ENCODE measurements at regions of chr15 and their contacts with region 1.

Region 1: GRCh38 chr15:63759752-63760151 is 74.0 kb downstream of the HERC1 start:
- DNase-seq: no peak
- H3K4me3 ChIP-seq: no peak overlapping the region
- H3K27ac ChIP-seq: no peak overlapping the region
- H3K4me1 ChIP-seq: peaks cover 6 to 20% (median 12%) of the 10 kb centered on the region in 4 donors
- H3K27me3 ChIP-seq: no peaks in the 10 kb centered on the region
- CTCF ChIP-seq: no peak
- EP300 ChIP-seq: no peak
- POLR2A ChIP-seq: no peak

Region 2: DNA sequence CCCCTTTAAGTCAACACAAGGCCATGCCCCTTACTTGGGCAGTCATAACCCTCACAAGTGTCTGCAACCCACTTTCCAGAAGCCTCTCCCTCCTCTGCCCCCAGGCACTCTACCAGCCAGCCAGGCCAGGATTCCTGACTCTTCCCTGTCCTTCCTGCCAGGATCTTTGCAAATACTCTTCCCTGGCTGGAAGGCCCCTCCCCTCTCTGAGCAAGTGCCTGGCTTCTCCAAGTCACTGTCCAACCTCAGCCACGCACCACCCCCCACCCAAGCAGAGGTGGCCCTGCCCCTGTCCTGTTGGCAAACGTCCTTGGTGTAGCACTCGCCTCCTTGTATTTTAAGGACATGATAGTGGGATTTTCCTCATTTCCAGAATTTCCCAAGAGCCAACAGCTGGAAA is 310.0 kb before region 1 on chr15:
- intact Hi-C with region 1: no loop called
- DNase-seq: no peak
- H3K4me3 ChIP-seq: no peak overlapping the region
- H3K27ac ChIP-seq: no peak overlapping the region
- H3K4me1 ChIP-seq: peaks cover 0 to 21% (median 7%) of the 10 kb centered on the region in 4 donors
- H3K27me3 ChIP-seq: no peaks in the 10 kb centered on the region
- CTCF ChIP-seq: no peak
- EP300 ChIP-seq: no peak
- POLR2A ChIP-seq: no peak

Region 3: DNA sequence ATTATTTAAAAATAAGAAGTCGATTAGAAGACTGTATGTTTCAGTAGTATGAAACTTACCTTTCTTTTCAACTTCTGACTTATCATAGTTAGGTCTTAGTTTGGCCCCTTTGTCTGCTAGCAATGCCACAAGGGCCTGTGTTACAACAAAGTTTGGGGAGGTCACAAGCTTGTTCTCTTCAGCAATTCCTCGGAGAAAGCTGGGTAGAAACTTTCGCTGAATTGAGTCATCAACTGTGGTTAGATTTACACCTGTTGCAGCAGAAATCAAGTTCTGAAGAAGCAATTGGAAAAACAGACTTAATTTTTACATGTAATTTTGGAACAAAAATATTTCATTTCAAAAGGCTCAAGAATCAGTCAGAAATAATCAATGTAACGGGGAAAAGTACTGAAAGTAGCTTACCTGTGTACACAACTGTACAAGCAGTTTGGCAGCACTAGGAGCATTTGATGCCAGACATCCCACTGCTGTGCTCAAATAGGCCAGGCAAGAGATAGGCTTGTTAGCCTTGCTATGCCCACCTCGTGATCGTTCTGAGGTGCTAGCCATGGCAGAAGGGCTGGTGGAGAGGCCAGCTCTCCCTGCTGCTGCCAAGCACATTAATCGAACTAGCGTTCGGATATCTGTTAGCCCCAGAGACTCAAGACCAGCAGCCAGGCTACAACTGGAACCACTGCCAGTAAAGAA is 103.9 kb before region 1 on chr15:
- intact Hi-C with region 1: no loop called
- DNase-seq: no peak
- H3K4me3 ChIP-seq: no peak overlapping the region
- H3K27ac ChIP-seq: no peak overlapping the region
- H3K4me1 ChIP-seq: no peaks in the 10 kb centered on the region
- H3K27me3 ChIP-seq: no peaks in the 10 kb centered on the region
- CTCF ChIP-seq: no peak
- EP300 ChIP-seq: no peak
- POLR2A ChIP-seq: no peak

Region 4: GRCh38 chr15:64067564-64068030 is 307.8 kb after region 1 on chr15:
- intact Hi-C with region 1: loop called (anchors 5 kb)
- DNase-seq: peak; percentile 72 to 83
- H3K4me3 ChIP-seq: no peak overlapping the region
- H3K27ac ChIP-seq: no peak overlapping the region
- H3K4me1 ChIP-seq: peaks cover 24 to 41% (median 29%) of the 10 kb centered on the region in 4 donors
- H3K27me3 ChIP-seq: no peaks in the 10 kb centered on the region
- CTCF ChIP-seq: peak in 5 of 7 experiments; percentile 76 to 91 (median 77)
- EP300 ChIP-seq: no peak
- POLR2A ChIP-seq: no peak